ENCODE measurements at regions of chr5 and their contacts with region 1.

Region 1: DNA sequence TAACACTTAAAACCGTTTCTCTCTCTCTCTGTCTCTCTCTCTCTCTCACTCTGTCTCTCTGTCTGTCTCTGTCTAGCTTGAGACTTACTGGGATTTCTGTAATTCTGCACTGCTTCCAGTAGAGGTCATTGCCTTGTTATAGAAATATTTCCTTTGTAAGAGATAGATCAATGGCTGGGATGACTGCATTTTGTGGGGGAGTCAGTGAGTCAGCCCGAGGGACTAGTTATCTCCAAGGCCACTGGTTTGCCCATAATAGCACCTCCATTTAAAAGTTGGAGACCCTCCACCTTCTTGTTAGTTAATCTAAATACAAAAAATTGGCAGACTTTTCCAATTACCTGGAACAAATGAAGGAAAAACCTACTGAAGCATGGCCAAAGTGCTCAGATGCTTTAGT is 547.2 kb downstream of the LRRC70 start:
- DNase-seq: peak; percentile 59
- H3K4me3 Mint-ChIP-seq: no peak overlapping the region
- H3K27ac Mint-ChIP-seq: no peak overlapping the region
- H3K4me1 Mint-ChIP-seq: peaks cover 7% of the 10 kb centered on the region
- H3K27me3 Mint-ChIP-seq: no peaks in the 10 kb centered on the region
- CTCF ChIP-seq: peak; percentile 50

Region 2: GRCh38 chr5:63822614-63823013 is 696.8 kb after region 1 on chr5:
- CTCF ChIA-PET with region 1: interaction called, 5 read pairs
- POLR2A ChIA-PET with region 1: no interaction called
- intact Hi-C with region 1: loop called (anchors 2 kb)
- DNase-seq: peak; percentile 1
- H3K4me3 Mint-ChIP-seq: no peak overlapping the region
- H3K27ac Mint-ChIP-seq: no peak overlapping the region
- H3K4me1 Mint-ChIP-seq: no peaks in the 10 kb centered on the region
- H3K27me3 Mint-ChIP-seq: no peaks in the 10 kb centered on the region
- CTCF ChIP-seq: peak; percentile 27

Region 3: DNA sequence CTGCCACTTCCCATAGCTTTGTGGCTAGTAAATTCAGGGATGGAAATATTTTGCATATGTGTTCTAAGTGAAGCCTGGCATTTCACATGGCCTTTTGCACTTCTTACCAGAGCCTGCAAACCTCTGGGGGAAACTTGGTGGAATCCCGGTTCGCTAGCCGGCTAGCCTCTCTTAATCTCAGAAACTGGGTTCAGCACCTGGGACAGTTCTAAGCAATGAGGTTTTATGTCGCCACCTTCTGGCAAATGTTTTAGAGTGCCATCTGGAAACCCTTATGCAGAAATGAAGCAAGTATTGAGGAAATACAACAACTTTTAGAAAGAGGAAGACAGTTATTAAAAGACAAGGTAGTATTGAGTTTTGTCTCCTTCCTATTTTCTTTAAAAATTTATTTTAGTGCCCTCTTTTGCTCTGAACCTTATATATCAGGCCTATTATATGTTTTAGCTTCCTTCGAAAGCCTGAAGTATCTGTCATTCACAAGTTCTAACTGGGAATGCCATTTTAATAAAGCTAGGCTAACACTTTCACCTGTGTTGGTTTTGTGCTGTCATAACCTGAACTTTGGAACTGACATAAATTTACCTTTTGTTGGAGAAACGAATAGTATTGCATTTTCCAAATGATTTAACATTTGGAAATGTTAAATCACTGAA is 837.3 kb after region 1 on chr5:
- CTCF ChIA-PET with region 1: interaction called, 11 read pairs
- POLR2A ChIA-PET with region 1: no interaction called
- intact Hi-C with region 1: loop called (anchors 2 kb)
- DNase-seq: peak; percentile 80
- H3K4me3 Mint-ChIP-seq: no peak overlapping the region
- H3K27ac Mint-ChIP-seq: no peak overlapping the region
- H3K4me1 Mint-ChIP-seq: peaks cover 4% of the 10 kb centered on the region
- H3K27me3 Mint-ChIP-seq: peaks cover 31% of the 10 kb centered on the region
- CTCF ChIP-seq: peak; percentile 67

Region 4: GRCh38 chr5:64207978-64208377 is 1082.1 kb after region 1 on chr5:
- CTCF ChIA-PET with region 1: no interaction called
- POLR2A ChIA-PET with region 1: no interaction called
- intact Hi-C with region 1: loop called (anchors 10 kb)
- DNase-seq: peak; percentile 34
- H3K4me3 Mint-ChIP-seq: no peak overlapping the region
- H3K27ac Mint-ChIP-seq: no peak overlapping the region
- H3K4me1 Mint-ChIP-seq: peaks cover 24% of the 10 kb centered on the region
- H3K27me3 Mint-ChIP-seq: no peaks in the 10 kb centered on the region
- CTCF ChIP-seq: peak; percentile 43

Measured in MCF 10A (cell line).